ENCODE measurements at regions of chr5 and their contacts with region 1.

Region 1: GRCh38 chr5:149567226-149567625 is 14.1 kb upstream of the ARHGEF37 start:
- DNase-seq: no peak
- H3K4me3 ChIP-seq: no peak overlapping the region
- H3K27ac ChIP-seq: no peak overlapping the region
- H3K4me1 ChIP-seq: peaks cover 0 to 24% (median 10%) of the 10 kb centered on the region in 6 donors
- H3K27me3 ChIP-seq: no peaks in the 10 kb centered on the region
- CTCF ChIP-seq: no peak
- POLR2A ChIP-seq: no peak

Region 2: DNA sequence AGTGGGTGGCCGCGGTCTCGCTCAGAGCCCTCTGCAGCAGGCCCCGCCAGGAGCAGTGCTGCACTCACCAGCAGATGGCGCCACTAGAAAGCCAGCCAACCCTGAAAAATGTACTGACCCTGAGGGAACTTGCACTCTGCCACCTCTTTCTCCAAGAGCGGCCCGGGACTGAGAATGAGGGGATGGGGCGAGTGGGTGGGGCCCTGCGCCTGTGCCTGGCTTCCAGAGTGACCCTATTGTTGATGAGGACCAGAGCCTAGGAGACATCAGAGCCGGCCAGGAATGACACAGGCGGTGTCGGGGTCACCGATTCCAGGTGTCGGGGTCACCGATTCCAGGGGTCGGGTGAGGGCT is 185.3 kb before region 1 on chr5:
- intact Hi-C with region 1: loop called (anchors 5 kb)
- DNase-seq: peak; percentile 92
- H3K4me3 ChIP-seq: peak overlapping the region in 1 of 8 donors; percentile 21
- H3K27ac ChIP-seq: peak overlapping the region in 4 of 8 donors; percentile 33 to 56 (median 50)
- H3K4me1 ChIP-seq: peaks cover 0 to 34% (median 12%) of the 10 kb centered on the region in 6 donors
- H3K27me3 ChIP-seq: peaks cover 0 to 18% (median 0%) of the 10 kb centered on the region in 7 donors
- CTCF ChIP-seq: peak; percentile 78 to 95 (median 89)
- POLR2A ChIP-seq: no peak

Region 3: GRCh38 chr5:149485655-149486425 is 81.4 kb before region 1 on chr5:
- intact Hi-C with region 1: no loop called
- DNase-seq: no peak
- H3K4me3 ChIP-seq: no peak overlapping the region
- H3K27ac ChIP-seq: peak overlapping the region in 4 of 8 donors; percentile 28 to 52 (median 38)
- H3K4me1 ChIP-seq: peaks cover 0 to 25% (median 0%) of the 10 kb centered on the region in 6 donors
- H3K27me3 ChIP-seq: no peaks in the 10 kb centered on the region
- CTCF ChIP-seq: no peak
- POLR2A ChIP-seq: no peak

Region 4: DNA sequence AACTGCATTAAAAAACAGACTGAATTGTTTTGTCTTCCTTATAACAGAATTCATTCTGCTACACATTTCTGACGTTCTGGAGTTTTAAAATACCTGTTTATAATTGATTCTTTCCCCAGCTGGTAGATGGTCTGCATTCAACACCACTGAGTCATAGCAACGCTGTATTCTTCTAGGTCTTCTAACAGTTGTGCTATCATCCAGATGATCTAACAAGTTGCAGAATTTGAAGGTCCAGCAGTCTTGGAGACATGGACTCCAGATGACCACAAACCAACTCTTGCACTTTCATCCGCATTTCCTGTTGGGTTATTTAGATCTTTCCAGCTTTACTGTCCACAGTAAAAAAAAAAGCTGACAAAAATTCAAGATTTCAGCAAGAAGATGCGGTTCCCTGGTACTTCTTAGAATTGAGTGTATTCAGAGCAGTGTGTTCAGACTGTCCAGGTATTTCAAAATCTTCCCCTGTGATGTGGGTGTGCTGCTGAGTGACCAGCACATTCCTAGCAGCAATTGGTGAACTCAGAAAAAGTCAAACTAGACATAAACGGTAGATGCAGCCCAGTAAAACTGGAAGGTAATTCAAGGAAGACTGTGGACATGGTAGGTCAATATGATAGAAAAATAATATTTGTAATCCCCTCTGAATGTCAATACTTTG is 66.2 kb before region 1 on chr5:
- intact Hi-C with region 1: no loop called
- DNase-seq: no peak
- H3K4me3 ChIP-seq: no peak overlapping the region
- H3K27ac ChIP-seq: no peak overlapping the region
- H3K4me1 ChIP-seq: peaks cover 0 to 3% (median 0%) of the 10 kb centered on the region in 6 donors
- H3K27me3 ChIP-seq: no peaks in the 10 kb centered on the region
- CTCF ChIP-seq: no peak
- POLR2A ChIP-seq: no peak

Region 5: GRCh38 chr5:149605998-149606724 is 38.9 kb after region 1 on chr5:
- intact Hi-C with region 1: no loop called
- DNase-seq: no peak
- H3K4me3 ChIP-seq: peak overlapping the region in 1 of 8 donors; percentile 5
- H3K27ac ChIP-seq: peak overlapping the region in 3 of 8 donors; percentile 8 to 53 (median 17)
- H3K4me1 ChIP-seq: peaks cover 0 to 19% (median 15%) of the 10 kb centered on the region in 6 donors
- H3K27me3 ChIP-seq: no peaks in the 10 kb centered on the region
- CTCF ChIP-seq: no peak
- POLR2A ChIP-seq: no peak